ENCODE measurements at regions of chr4 and their contacts with region 1.

Region 1: DNA sequence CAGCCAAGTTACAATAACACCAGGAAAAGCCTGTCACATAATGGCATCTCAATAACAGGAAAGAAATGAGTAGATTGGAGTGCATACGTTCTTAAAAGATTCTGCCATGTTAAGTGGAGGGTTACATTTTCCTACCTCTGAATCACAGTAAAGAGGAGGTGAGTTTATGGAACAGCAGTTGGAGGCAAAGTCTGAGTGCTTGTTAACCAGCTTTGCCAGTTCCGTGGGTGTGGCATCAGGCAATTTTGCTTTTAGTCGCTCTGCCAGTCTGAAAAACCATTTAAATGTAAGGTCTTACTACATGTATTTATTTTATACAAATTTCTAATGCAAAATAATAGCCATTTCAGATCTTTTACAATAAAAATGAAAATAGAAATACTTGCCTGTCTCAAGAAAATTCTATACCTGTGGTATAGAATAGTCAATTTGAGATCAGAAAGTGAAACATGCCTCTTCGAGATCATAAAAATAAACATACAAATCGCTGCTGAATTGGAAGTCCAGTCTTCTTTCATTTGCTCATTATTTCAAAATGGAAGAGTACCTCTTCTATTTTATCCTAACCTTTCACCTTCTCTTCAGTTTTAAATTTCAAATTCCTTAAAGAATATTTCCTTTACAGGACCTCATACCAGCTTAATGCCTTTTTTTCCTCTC is 31.4 kb downstream of the GC start:
- DNase-seq: no peak
- ATAC-seq: no peak
- H3K4me3 ChIP-seq: no peak overlapping the region
- H3K27ac ChIP-seq: no peak overlapping the region
- H3K4me1 ChIP-seq: no peaks in the 10 kb centered on the region
- H3K27me3 ChIP-seq: peaks cover 0 to 2% (median 0%) of the 10 kb centered on the region in 3 donors
- CTCF ChIP-seq: no peak

Region 2: GRCh38 chr4:71595576-71596108 is 156.9 kb before region 1 on chr4:
- intact Hi-C with region 1: no loop called
- DNase-seq: no peak
- ATAC-seq: no peak
- H3K4me3 ChIP-seq: no peak overlapping the region
- H3K27ac ChIP-seq: no peak overlapping the region
- H3K4me1 ChIP-seq: no peaks in the 10 kb centered on the region
- H3K27me3 ChIP-seq: no peaks in the 10 kb centered on the region
- CTCF ChIP-seq: no peak

Region 3: GRCh38 chr4:72352403-72353105 is 600.0 kb after region 1 on chr4:
- intact Hi-C with region 1: no loop called
- DNase-seq: no peak
- ATAC-seq: no peak
- H3K4me3 ChIP-seq: no peak overlapping the region
- H3K27ac ChIP-seq: no peak overlapping the region
- H3K4me1 ChIP-seq: no peaks in the 10 kb centered on the region
- H3K27me3 ChIP-seq: no peaks in the 10 kb centered on the region
- CTCF ChIP-seq: no peak

Region 4: DNA sequence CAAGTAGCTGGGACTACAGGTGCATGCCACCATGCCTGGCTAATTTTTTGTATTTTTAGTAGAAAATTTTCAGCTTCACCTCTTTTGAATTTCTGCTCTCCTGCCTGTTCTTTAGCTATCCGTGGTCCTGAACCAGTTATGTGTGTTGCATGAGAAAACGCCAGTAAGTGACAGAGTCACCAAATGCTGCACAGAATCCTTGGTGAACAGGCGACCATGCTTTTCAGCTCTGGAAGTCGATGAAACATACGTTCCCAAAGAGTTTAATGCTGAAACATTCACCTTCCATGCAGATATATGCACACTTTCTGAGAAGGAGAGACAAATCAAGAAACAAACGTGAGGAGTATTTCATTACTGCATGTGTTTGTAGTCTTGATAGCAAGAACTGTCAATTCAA is 1665.5 kb after region 1 on chr4:
- intact Hi-C with region 1: loop called in 1 of 2 experiments (anchors 10 kb)
- DNase-seq: no peak
- ATAC-seq: no peak
- H3K4me3 ChIP-seq: no peak overlapping the region
- H3K27ac ChIP-seq: no peak overlapping the region
- H3K4me1 ChIP-seq: no peaks in the 10 kb centered on the region
- H3K27me3 ChIP-seq: no peaks in the 10 kb centered on the region
- CTCF ChIP-seq: no peak

Measured in psoas muscle (tissue), 8 donors.